Sigmoid colon (tissue), 7 donors: ENCODE measurements at regions of chr7 and their contacts with region 1.

Region 1: DNA sequence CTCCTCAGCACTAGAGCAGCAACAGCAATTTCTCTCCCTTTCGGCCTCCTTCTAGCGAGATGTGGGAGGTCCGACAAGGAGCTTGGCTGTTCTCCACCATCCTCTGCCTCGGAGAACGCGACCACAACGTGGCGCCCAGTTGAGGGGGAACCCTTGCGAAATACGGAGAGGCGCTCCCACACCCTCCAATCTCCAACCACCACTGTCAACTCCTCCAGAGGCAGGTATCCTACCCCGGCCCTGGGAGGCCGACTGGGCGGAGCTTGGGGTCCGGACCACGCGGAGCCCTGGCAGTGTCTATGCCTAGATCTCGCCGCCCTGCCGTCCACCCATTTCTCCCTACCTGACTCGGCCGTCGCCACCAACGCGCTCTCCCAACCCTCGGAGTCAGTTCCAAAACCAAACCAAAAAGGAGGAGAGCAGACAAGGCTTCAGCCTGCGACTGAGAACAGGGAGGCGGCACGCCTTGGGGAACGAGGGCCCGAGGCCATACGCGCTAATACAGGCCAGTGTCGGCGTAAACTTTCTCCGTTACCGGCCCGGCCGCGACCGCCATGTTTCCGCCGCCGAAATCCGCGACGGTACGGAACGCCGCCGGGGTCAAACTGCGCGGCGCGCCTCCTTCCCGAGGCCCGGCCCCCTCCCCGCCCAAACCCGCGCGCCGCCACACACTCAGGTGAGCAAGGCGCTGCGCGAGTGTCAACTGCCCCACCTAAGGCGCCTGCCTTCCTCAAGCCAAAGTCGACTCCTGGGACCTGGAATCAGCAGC is at the start of gene TMEM168:
- DNase-seq: peak; percentile 84
- H3K4me3 ChIP-seq: peak within 1 kb of the TSS; percentile 67 to 93 (median 78)
- H3K27ac ChIP-seq: peak within 1 kb of the TSS; percentile 86 to 90 (median 88)
- H3K4me1 ChIP-seq: peaks cover 0 to 14% (median 12%) of the 10 kb centered on the region in 4 donors
- H3K27me3 ChIP-seq: no peaks in the 10 kb centered on the region
- CTCF ChIP-seq: no peak
- EP300 ChIP-seq: no peak
- POLR2A ChIP-seq: peak; percentile 32 to 49
- total RNA-seq, gene TMEM168: 14.3 to 24.3 (median 16.4) TPM

Region 2: GRCh38 chr7:111672891-111673290 is 1117.1 kb before region 1 on chr7:
- intact Hi-C with region 1: no loop called
- DNase-seq: no peak
- H3K4me3 ChIP-seq: no peak overlapping the region
- H3K27ac ChIP-seq: no peak overlapping the region
- H3K4me1 ChIP-seq: no peaks in the 10 kb centered on the region
- H3K27me3 ChIP-seq: no peaks in the 10 kb centered on the region
- CTCF ChIP-seq: no peak
- EP300 ChIP-seq: no peak
- POLR2A ChIP-seq: no peak

Region 3: DNA sequence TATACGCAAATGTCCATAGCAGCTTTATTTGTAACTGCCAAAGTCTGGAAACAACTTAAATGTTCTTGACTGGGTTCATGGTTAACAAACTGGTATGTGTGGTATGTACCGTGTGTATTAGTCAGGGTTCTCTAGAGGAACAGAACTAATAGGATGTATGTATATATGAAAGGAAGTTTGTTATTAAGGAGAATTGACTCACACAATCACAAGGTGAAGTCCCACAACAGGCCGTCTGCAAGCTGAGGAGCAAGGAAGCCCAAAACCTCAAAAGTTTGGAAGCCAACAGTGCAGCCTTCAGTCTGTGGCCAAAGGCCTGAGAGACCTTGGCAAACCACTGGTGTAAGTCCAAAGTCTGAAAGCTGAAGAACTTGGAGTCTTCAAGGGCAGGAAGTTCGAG is 66.6 kb before region 1 on chr7:
- intact Hi-C with region 1: no loop called
- DNase-seq: no peak
- H3K4me3 ChIP-seq: no peak overlapping the region
- H3K27ac ChIP-seq: no peak overlapping the region
- H3K4me1 ChIP-seq: no peaks in the 10 kb centered on the region
- H3K27me3 ChIP-seq: no peaks in the 10 kb centered on the region
- CTCF ChIP-seq: no peak
- EP300 ChIP-seq: no peak
- POLR2A ChIP-seq: no peak

Region 4: DNA sequence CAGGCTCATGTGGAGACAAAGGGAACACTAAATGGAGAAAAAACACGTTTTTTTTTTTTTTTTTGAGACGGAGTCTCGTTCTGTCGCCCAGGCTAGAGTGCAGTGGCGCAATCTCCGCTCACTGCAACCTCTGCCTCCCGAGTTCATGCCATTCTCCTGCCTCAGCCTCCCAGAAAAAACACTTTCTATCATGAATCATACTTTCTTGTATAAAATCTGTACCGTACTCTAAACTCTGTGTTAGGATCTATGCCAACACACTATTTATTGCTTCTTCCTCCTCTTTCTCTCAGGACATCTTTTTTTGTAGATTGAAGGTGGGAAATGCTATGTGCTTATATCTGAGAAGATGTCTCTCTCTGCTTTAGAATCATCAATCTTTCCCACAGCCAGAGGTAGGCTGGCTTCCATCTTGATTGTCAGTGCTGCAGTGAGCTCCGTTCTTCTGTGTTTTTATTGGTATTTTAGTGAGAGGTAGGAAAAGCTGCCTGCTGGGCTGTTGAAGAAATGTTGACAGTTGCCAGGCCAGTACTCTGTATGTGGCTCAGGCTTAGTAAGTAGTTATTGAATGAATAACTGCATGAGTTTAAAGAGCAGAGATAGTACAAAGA is 195.5 kb after region 1 on chr7:
- intact Hi-C with region 1: loop called (anchors 5 kb)
- DNase-seq: peak; percentile 69
- H3K4me3 ChIP-seq: no peak overlapping the region
- H3K27ac ChIP-seq: peak overlapping the region in 3 of 4 donors; percentile 57 to 61 (median 57)
- H3K4me1 ChIP-seq: peaks cover 0 to 17% (median 14%) of the 10 kb centered on the region in 4 donors
- H3K27me3 ChIP-seq: no peaks in the 10 kb centered on the region
- CTCF ChIP-seq: no peak
- EP300 ChIP-seq: peak in 3 of 4 donors; percentile 5 to 44 (median 38)
- POLR2A ChIP-seq: no peak

Region 5: DNA sequence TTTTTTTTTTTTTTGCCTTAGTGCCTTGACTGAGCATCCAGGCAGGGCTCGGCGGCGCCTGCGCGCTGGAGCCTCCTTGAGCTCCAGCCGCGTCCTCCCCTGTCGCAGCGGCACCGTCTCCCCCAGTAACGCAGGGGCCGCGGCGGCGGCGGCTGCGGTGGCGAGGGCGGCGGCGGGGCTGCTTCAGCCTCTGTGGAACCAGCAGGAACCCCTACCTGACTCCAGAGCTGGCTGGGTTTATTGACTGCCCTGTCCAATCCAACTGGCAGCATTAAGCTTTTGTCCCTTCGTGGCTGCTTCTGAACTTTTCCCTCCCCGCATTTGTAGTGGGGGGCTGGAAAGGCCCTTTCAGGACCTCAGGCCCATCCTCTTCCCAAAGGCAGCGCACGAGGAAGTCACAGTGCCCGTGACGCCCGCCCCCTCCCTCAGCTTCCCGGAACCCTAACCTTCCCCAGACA is 296.5 kb after region 1 on chr7 and contains the start of gene GPR85:
- intact Hi-C with region 1: no loop called
- DNase-seq: peak; percentile 76
- H3K4me3 ChIP-seq: peak within 1 kb of the TSS; percentile 30 to 54 (median 52)
- H3K27ac ChIP-seq: peak within 1 kb of the TSS; percentile 28 to 61 (median 39)
- H3K4me1 ChIP-seq: peaks cover 0 to 18% (median 10%) of the 10 kb centered on the region in 4 donors
- H3K27me3 ChIP-seq: no peaks in the 10 kb centered on the region
- CTCF ChIP-seq: no peak
- EP300 ChIP-seq: no peak
- POLR2A ChIP-seq: no peak
- total RNA-seq, gene GPR85: 0.16 to 6.1 (median 0.67) TPM

Region 6: GRCh38 chr7:113118074-113118959 is 328.3 kb after region 1 on chr7 and contains the start of gene SMIM30:
- intact Hi-C with region 1: loop called (anchors 10 kb)
- DNase-seq: peak; percentile 96
- H3K4me3 ChIP-seq: peak within 1 kb of the TSS; percentile 45 to 62 (median 54)
- H3K27ac ChIP-seq: peak within 1 kb of the TSS; percentile 62 to 77 (median 68)
- H3K4me1 ChIP-seq: peaks cover 0 to 11% (median 4%) of the 10 kb centered on the region in 4 donors
- H3K27me3 ChIP-seq: no peaks in the 10 kb centered on the region
- CTCF ChIP-seq: no peak
- EP300 ChIP-seq: no peak
- POLR2A ChIP-seq: peak; percentile 86 to 87
- total RNA-seq, gene SMIM30: 46.2 to 79.0 (median 57.7) TPM